Activated CD4-positive, alpha-beta T cell treated with anti-CD3 and anti-CD28 coated beads, Interleukin-2, amount 10 ng/mL, durations not matched to agents 24 days and 14 days (primary cell): ENCODE measurements at regions of chr5 and their contacts with region 1.

Region 1: DNA sequence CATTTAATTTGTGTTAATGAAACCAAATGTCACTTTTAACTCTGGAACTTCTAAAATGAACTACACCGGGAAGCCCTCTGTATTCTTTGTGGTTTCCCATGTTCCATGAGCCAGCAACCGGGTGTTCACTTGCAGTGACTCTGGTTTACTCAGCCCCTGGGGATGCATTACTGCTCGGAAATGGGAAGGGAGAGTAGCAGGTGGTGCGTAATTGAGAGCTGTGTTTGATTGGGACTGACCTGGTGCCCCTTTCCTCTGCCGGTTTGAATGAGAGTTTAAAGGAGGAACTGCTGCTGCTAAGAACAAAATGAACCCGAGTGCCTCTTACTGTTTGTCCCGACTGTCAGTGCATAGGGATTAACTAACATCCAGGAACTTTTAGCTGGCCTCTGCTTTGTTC is 100.1 kb upstream of the DHFR start:
- DNase-seq: peak; percentile 79
- H3K4me3 Mint-ChIP-seq: peak overlapping the region; percentile 66
- H3K27ac Mint-ChIP-seq: peak overlapping the region; percentile 96
- H3K4me1 Mint-ChIP-seq: peaks cover 63% of the 10 kb centered on the region
- H3K27me3 Mint-ChIP-seq: no peaks in the 10 kb centered on the region

Region 2: GRCh38 chr5:80125962-80126480 is 628.9 kb before region 1 on chr5:
- intact Hi-C with region 1: loop called (anchors 5 kb)
- DNase-seq: peak; percentile 78
- H3K4me3 Mint-ChIP-seq: peak overlapping the region; percentile 26
- H3K27ac Mint-ChIP-seq: peak overlapping the region; percentile 70
- H3K4me1 Mint-ChIP-seq: peaks cover 28% of the 10 kb centered on the region
- H3K27me3 Mint-ChIP-seq: no peaks in the 10 kb centered on the region

Region 3: DNA sequence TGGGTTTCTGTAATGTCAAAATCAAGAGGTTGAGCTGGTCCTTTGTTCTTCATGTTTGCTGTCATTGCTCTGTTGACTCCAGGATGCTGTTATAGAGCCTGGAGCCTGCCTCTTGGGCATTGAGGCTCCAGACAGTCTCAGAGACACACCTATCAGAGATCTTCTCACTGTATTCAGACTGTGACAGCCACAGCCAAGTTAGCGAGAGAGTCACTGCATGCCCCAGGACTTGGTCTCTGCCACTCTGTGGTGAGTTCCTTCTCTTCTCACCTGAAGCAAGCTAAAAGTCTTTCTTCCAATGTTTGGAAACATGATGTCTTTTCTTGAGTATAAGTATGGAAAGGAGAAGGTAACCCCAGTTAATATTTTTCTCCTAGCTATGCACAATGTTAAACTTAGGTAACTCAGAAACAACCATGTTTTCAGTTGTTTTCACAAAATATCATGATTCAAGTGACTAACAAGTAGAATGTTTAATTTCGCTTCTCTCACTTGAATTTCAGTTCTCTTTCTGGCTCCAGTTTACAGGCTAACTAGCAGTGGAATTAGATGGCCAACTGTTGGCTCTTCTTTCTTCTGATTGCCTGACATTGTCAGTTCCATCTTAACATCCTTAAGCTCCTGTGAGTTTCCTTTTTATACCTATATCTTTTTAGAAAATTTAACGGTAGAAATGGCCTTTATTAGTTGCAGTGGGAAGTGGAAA is 367.7 kb before region 1 on chr5:
- intact Hi-C with region 1: no loop called
- DNase-seq: no peak
- H3K4me3 Mint-ChIP-seq: no peak overlapping the region
- H3K27ac Mint-ChIP-seq: no peak overlapping the region
- H3K4me1 Mint-ChIP-seq: no peaks in the 10 kb centered on the region
- H3K27me3 Mint-ChIP-seq: peaks cover 17% of the 10 kb centered on the region

Region 4: GRCh38 chr5:80793354-80793753 is 38.5 kb after region 1 on chr5:
- intact Hi-C with region 1: loop called (anchors 1 kb)
- DNase-seq: no peak
- H3K4me3 Mint-ChIP-seq: no peak overlapping the region
- H3K27ac Mint-ChIP-seq: no peak overlapping the region
- H3K4me1 Mint-ChIP-seq: peaks cover 6% of the 10 kb centered on the region
- H3K27me3 Mint-ChIP-seq: no peaks in the 10 kb centered on the region

Region 5: DNA sequence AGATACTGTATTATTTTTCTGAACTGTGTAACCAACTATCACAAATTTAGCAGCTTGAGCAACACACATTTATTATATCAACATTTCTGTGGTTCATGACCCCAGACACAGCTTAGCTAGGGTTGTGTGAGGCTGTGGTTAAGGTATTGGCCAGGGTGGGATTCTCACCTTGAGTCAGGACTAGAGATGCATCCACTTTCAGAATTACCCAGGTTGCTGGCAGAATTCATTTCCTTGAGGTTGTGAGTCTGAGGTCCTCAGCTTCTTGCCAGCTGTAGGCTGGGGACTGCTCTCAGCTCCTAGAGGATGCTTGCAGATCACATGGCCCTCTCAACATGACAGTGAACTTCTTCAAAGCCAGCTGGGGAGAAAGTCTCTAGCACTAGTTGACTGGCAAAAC is 82.8 kb after region 1 on chr5:
- intact Hi-C with region 1: no loop called
- DNase-seq: peak; percentile 68
- H3K4me3 Mint-ChIP-seq: no peak overlapping the region
- H3K27ac Mint-ChIP-seq: no peak overlapping the region
- H3K4me1 Mint-ChIP-seq: peaks cover 24% of the 10 kb centered on the region
- H3K27me3 Mint-ChIP-seq: no peaks in the 10 kb centered on the region

Region 6: DNA sequence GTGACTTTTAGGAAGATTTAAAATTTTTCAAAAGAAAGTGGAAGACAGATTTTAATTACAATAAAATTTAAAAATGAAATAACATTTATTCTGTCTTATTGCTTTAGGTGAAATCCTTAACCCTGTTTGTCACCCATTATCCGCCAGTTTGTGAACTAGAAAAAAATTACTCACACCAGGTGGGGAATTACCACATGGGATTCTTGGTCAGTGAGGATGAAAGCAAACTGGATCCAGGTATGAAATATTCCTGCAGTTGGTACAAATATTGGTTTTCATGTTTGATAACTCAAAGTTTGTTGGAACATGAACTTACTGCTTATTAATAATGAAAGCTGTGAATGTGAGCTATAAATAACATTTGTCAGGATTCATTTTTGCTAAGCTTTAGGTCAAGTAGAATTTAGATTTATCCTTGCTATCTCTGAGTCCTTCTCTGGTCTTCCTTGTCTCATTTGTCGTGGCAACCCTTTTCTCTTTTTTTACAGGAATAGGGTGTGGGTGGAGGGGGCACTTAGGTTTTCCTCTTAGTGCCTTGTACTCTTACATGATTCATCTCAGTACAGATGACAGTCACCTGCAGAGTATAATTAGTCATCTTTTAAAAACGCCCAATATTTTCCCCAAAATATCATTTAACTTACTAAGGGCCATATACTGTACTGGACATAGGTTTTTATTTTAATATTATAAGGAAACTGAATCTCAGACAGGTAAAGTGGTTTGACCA is 110.0 kb after region 1 on chr5:
- intact Hi-C with region 1: loop called (anchors 1 kb)
- DNase-seq: no peak
- H3K4me3 Mint-ChIP-seq: peak overlapping the region; percentile 26
- H3K27ac Mint-ChIP-seq: peak overlapping the region; percentile 74
- H3K4me1 Mint-ChIP-seq: peaks cover 53% of the 10 kb centered on the region
- H3K27me3 Mint-ChIP-seq: no peaks in the 10 kb centered on the region

Region 7: GRCh38 chr5:81006947-81007636 is 252.2 kb after region 1 on chr5:
- intact Hi-C with region 1: loop called (anchors 1 kb)
- DNase-seq: peak; percentile 89
- H3K4me3 Mint-ChIP-seq: peak overlapping the region; percentile 82
- H3K27ac Mint-ChIP-seq: peak overlapping the region; percentile 94
- H3K4me1 Mint-ChIP-seq: peaks cover 41% of the 10 kb centered on the region
- H3K27me3 Mint-ChIP-seq: no peaks in the 10 kb centered on the region

Region 8: GRCh38 chr5:81105261-81105877 is 350.5 kb after region 1 on chr5:
- intact Hi-C with region 1: loop called (anchors 5 kb)
- DNase-seq: peak; percentile 59
- H3K4me3 Mint-ChIP-seq: no peak overlapping the region
- H3K27ac Mint-ChIP-seq: no peak overlapping the region
- H3K4me1 Mint-ChIP-seq: peaks cover 25% of the 10 kb centered on the region
- H3K27me3 Mint-ChIP-seq: no peaks in the 10 kb centered on the region